ENCODE measurements at regions of chr11 and their contacts with region 1.

Region 1: DNA sequence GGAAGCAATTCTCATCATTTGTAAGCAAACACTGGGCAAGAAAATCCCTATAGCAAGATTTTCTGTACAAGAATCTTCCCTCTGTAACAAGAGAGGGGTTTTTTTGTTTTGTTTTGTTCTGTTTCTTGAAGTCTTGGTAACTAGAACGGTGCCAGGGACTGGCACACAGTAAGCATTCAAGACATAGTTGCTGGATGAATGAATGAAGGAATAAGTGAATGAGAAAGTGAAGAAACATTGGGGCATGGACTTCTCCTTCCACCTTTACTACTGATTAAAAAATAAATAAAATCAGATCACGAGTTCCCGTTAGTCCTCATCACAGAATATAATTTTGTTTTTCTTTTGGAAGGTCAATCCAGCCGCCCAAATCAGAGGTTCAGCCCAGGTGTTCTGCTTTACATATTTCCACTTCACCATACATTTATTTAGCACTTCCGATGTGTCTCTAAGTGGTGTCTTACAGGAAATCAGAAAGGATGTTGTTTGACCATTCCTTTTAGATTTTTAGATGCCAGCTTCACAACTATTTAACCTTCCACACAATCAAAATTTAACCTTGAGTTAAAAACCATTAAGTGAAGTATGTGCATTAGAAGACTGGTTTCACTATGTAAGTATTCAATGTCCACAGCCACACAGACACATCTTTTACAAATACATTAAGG is 281.2 kb downstream of the CADM1 start:
- DNase-seq: no peak
- H3K4me3 ChIP-seq: no peak overlapping the region
- H3K4me3 Mint-ChIP-seq: peak overlapping the region in 3 of 7 donors; percentile 43 to 72 (median 60)
- H3K27ac ChIP-seq: peak overlapping the region; percentile 64
- H3K27ac Mint-ChIP-seq: peak overlapping the region; percentile 74 to 95 (median 91)
- H3K4me1 ChIP-seq: peaks cover 13% of the 10 kb centered on the region
- H3K4me1 Mint-ChIP-seq: peaks cover 18 to 40% (median 37%) of the 10 kb centered on the region in 3 donors
- H3K27me3 ChIP-seq: no peaks in the 10 kb centered on the region
- H3K27me3 Mint-ChIP-seq: peaks cover 0 to 2% of the 10 kb centered on the region in 2 donors

Region 2: DNA sequence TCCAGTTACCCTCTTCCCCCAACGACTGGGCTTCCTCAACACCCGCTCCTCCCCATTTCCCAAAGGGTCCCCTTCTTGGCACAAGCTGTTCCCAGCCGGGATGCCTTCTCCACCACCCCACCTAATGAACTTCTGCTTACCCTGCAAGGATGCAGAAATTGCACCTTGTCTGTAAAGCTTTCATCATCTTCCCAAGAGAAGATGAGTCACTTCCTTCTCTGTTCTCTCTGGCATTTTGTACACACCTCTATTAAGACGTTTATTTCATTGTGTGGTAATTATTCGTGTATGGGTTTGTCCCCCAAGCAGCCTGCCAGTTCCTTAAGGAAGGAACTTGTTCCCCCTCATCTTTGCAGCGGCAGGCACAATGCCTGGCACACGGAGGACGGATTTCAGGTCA is 69.9 kb before region 1 on chr11:
- CTCF ChIA-PET with region 1: no interaction called
- POLR2A ChIA-PET with region 1: interaction called, 11 read pairs
- DNase-seq: no peak
- H3K4me3 ChIP-seq: no peak overlapping the region
- H3K4me3 Mint-ChIP-seq: no peak overlapping the region
- H3K27ac ChIP-seq: no peak overlapping the region
- H3K27ac Mint-ChIP-seq: no peak overlapping the region
- H3K4me1 ChIP-seq: no peaks in the 10 kb centered on the region
- H3K4me1 Mint-ChIP-seq: no peaks in the 10 kb centered on the region
- H3K27me3 ChIP-seq: no peaks in the 10 kb centered on the region
- H3K27me3 Mint-ChIP-seq: peaks cover 0 to 1% of the 10 kb centered on the region in 2 donors

Measured in CD8-positive, alpha-beta memory T cell (primary cell).